ENCODE measurements at regions of chr11 and their contacts with region 1.

Region 1: GRCh38 chr11:101880222-101880621 is 34.6 kb upstream of the CEP126 start:
- DNase-seq: no peak
- ATAC-seq: no peak
- H3K4me3 Mint-ChIP-seq: no peak overlapping the region
- H3K27ac Mint-ChIP-seq: no peak overlapping the region
- H3K4me1 Mint-ChIP-seq: no peaks in the 10 kb centered on the region
- H3K27me3 Mint-ChIP-seq: peaks cover 25% of the 10 kb centered on the region
- CTCF ChIP-seq: no peak

Region 2: DNA sequence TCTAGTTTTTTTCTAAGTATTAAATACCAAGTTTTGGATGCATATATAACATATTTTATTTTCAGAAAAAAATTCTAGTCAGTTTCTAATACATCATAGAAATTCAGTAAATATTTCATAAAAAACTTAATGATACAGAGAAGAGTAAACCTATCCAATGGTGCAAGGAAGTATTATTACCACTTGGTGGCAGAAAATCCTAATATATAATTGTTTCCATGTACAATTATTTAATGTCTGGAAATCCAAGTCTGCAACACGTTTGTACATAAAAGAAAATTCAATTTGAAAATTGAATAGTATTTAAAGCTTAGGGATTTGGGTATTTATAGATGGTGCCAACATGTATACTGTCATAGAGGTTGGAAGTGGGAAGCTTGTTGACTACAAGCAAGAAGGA is 423.4 kb before region 1 on chr11:
- CTCF ChIA-PET with region 1: no interaction called
- POLR2A ChIA-PET with region 1: no interaction called
- intact Hi-C with region 1: loop called (anchors 1 kb)
- DNase-seq: no peak
- ATAC-seq: no peak
- H3K4me3 Mint-ChIP-seq: no peak overlapping the region
- H3K27ac Mint-ChIP-seq: no peak overlapping the region
- H3K4me1 Mint-ChIP-seq: no peaks in the 10 kb centered on the region
- H3K27me3 Mint-ChIP-seq: no peaks in the 10 kb centered on the region
- CTCF ChIP-seq: no peak

Region 3: GRCh38 chr11:102047305-102047924 is 167.2 kb after region 1 on chr11 and contains the start of gene CFAP300:
- CTCF ChIA-PET with region 1: no interaction called
- POLR2A ChIA-PET with region 1: no interaction called
- intact Hi-C with region 1: no loop called
- DNase-seq: peak; percentile 18
- ATAC-seq: peak; percentile 25
- H3K4me3 Mint-ChIP-seq: peak within 1 kb of the TSS; percentile 67
- H3K27ac Mint-ChIP-seq: no peak within 1 kb of the TSS
- H3K4me1 Mint-ChIP-seq: peaks cover 6% of the 10 kb centered on the region
- H3K27me3 Mint-ChIP-seq: peaks cover 30% of the 10 kb centered on the region
- CTCF ChIP-seq: no peak
- total RNA-seq, gene CFAP300: not detected in 2 replicates